Cardiac septum (tissue), 1 donor: ENCODE measurements at regions of chr16 and their contacts with region 1.

Region 1: GRCh38 chr16:78591682-78592103 is 492.2 kb downstream of the WWOX start:
- DNase-seq: no peak

Region 2: DNA sequence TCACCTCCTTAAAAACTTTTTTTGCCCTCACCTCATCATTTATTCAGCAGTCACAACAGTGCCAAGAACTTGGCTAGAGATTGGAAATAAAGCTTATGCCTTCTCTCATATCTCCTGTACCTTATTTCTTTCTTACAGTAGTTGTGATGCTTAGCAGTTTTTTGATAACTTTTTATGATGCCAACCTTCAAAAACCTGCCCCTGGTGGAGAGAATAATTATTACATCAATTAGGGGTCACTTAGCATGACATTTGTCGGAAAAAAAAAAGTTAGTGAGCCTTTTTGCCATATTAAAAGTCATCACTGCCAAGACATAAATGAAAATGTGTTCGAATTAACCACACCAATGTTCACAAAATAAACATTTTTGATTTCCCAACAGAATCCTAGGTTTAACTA is 195.6 kb before region 1 on chr16:
- intact Hi-C with region 1: no loop called
- DNase-seq: no peak

Region 3: DNA sequence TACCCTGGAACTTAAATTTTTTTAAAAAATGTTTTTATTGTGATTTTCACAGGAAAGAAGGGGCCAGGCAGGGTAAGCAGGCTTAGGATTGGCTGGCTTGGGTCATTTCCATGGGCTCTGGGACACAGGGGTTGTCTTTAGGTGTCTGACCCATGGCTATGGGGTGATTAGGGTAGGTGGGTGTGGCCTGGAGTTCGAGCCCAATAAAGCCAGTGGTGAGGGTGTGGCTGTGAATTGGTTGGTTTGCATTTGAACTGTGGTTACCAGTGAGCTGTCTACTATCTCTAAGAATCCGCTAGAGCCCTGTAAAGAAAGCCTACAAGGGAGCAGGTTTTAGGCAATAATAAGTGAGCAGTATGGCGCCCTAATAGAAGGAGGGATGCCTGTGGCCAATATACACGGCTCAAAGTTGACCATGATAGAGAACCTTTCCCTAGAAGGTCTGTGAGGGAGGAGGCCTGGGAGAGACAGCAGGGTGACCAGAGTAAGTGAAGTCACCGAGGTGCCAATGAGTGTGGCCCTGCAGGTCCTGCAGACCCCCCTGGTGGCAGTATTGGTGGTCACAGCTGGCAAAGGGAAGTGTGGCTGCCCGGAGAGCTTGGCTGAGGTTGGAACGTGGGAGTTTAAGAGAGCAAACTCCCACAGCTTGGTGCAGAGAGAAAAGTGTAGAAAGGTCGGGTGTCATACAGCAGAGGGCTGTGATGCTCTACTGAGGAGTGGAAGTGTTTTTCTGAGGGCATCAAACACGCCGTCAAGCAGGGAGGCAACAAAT is 38.2 kb before region 1 on chr16:
- intact Hi-C with region 1: loop called (anchors 1 kb)
- DNase-seq: no peak